AG04449 (cell line): ENCODE measurements at regions of chr17 and their contacts with region 1.

Region 1: DNA sequence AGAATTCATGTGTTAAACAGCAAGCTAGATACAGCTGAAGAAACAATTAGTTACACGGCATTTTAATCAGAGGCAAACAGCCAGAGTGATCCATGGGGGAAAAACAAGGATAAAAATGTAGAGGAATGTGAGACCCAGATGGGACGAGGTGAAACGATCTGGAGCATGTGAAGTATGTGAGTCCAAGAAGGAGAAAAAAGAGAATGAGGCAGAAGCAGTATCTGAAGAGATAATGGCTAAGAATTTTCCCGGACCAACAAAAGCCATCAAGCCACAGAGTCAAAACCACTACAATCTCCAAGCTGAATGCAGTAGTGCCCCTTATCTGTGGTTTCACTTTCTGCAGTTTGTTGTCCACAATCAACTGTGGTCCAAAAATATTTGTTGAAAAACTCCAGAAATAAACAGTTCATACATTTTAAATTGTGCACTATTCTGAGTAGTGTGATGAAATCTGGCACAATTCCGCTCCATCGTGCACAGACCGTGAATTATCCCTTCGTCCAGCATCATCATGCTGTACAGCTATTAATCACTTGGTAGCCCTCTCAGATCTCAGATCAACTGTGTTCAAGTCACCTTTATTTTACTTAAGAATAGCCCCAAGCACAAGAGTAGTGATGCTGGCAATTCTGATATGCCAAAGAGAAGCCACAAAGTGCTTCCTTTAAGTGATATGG is 18.8 kb downstream of the MYH10 start:
- DNase-seq: no peak
- H3K4me3 ChIP-seq: peak overlapping the region; percentile 42
- CTCF ChIP-seq: no peak

Region 2: GRCh38 chr17:8581002-8581658 is 30.6 kb before region 1 on chr17:
- CTCF ChIA-PET with region 1: no interaction called
- POLR2A ChIA-PET with region 1: no interaction called
- DNase-seq: no peak
- H3K4me3 ChIP-seq: no peak overlapping the region
- CTCF ChIP-seq: no peak

Region 3: GRCh38 chr17:8623591-8623990 is 11.8 kb after region 1 on chr17:
- CTCF ChIA-PET with region 1: interaction called, 10 read pairs
- POLR2A ChIA-PET with region 1: interaction called, 4 read pairs
- DNase-seq: no peak
- H3K4me3 ChIP-seq: no peak overlapping the region
- CTCF ChIP-seq: no peak

Region 4: DNA sequence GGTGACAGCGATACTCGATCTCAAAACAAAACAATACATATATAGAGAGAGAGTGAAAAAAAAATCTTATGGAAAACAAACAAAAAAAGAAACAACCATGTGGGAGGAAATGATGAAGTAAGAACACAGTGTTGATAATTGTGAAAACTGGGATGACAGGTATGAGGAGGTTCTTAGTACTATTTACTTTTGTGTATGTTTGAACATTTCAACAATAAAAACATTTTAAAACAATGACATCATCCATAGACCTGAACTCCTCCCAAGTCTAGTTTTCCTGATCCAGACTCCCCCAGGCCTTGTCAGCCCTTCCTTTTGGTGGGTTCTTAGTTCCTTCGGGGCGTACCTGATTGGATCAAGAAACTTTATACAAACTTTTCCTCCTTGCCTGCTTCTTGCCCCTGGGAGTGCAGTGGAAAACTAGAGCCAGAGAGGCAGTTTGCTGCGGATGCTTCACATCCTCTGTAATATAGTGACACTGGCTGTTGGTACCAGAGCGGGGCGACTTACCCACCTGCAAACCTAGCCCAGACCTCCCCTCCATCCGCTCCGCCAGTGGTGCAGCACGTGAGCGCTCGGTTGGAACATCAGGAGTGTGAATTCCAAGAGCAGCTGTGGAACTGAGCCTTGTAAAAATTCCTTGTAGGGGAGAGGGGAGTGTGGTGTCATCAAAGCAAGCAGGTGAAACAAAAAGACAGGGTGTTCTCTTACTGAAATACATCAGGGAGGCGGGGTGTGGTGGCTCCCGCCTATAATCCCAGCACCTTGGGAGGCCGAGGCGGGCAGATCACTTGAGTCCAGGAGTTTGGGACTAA is 81.4 kb after region 1 on chr17:
- CTCF ChIA-PET with region 1: no interaction called
- POLR2A ChIA-PET with region 1: no interaction called
- DNase-seq: no peak
- H3K4me3 ChIP-seq: no peak overlapping the region
- CTCF ChIP-seq: no peak